ENCODE measurements at regions of chr19 and their contacts with region 1.

Region 1: GRCh38 chr19:49877020-49877878 is at the starts of genes AKT1S1 and TBC1D17:
- DNase-seq: peak; percentile 99 to 100 (median 100)
- H3K4me3 ChIP-seq: peak within 1 kb of the TSS; percentile 97 to 98
- H3K4me3 Mint-ChIP-seq: no peak within 1 kb of the TSS
- H3K27ac ChIP-seq: peak within 1 kb of the TSS; percentile 95
- H3K27ac Mint-ChIP-seq: no peak within 1 kb of the TSS
- H3K4me1 ChIP-seq: peaks cover 29% of the 10 kb centered on the region
- H3K4me1 Mint-ChIP-seq: peaks cover 14 to 44% (median 18%) of the 10 kb centered on the region in 4 donors
- H3K27me3 ChIP-seq: no peaks in the 10 kb centered on the region
- H3K27me3 Mint-ChIP-seq: no peaks in the 10 kb centered on the region
- total RNA-seq, gene AKT1S1: 19.7 to 20.2 TPM
- total RNA-seq, gene TBC1D17: 101 TPM

Region 2: GRCh38 chr19:49640113-49640898 is 236.9 kb before region 1 on chr19 and contains the start of gene RRAS:
- CTCF ChIA-PET with region 1: no interaction called
- POLR2A ChIA-PET with region 1: interaction called, 15 read pairs
- intact Hi-C with region 1: loop called (anchors 1 kb)
- DNase-seq: peak; percentile 99 to 100 (median 100)
- H3K4me3 ChIP-seq: peak within 1 kb of the TSS; percentile 42 to 73
- H3K4me3 Mint-ChIP-seq: peak within 1 kb of the TSS; percentile 89 to 95 (median 92)
- H3K27ac ChIP-seq: peak within 1 kb of the TSS; percentile 97
- H3K27ac Mint-ChIP-seq: peak within 1 kb of the TSS; percentile 96 to 100 (median 99)
- H3K4me1 ChIP-seq: peaks cover 63% of the 10 kb centered on the region
- H3K4me1 Mint-ChIP-seq: peaks cover 44 to 73% (median 56%) of the 10 kb centered on the region in 4 donors
- H3K27me3 ChIP-seq: no peaks in the 10 kb centered on the region
- H3K27me3 Mint-ChIP-seq: no peaks in the 10 kb centered on the region
- total RNA-seq, gene RRAS: 12.0 to 13.4 TPM

Region 3: DNA sequence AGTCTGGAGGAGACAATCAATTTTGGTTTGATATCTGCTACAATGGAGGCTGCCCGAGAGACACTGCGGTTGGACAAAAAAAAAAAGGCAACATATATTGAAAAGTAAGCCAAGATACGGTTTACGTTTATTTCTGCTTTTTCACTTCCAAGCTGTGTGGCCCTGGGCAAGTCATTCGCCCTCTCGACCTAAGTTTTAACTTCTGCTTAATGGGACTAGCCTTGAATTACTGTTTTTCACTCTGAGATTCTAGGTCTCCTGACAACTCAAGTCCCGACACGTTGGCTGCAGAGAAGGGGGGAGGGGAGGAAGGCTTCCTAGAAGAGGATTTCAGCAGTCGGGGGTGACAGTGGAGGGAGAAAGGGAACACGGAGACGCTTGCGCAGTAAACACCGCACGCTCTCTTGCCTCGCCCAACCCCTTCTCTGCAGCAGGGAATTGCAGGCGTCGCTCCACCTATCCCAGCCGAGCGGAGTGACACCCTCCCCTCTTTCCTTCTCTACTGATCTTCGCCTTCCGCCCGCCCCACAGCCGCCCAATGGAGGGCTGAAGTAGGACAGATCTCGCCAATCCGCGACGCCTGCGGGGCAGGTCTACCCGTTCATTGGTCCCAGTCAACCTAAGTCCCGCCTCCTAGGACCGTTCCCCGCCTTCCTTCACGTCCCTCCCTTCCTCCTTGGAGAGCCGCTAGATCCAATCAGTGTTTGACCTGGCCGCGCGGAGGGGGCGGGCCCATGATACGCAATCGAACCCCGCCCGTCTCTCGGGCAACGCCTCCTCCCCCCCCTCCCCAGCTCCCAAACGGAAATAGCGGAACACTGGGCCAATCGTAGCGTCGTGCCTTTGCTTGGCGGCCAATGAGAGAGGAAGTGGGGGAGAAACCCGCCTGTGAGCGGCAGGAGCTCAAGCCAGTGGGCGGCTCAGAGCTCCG is 111.0 kb before region 1 on chr19:
- CTCF ChIA-PET with region 1: no interaction called
- POLR2A ChIA-PET with region 1: interaction called, 24 read pairs
- intact Hi-C with region 1: loop called (anchors 1 kb)
- DNase-seq: peak; percentile 98 to 100 (median 100)
- H3K4me3 ChIP-seq: peak overlapping the region; percentile 75 to 88
- H3K4me3 Mint-ChIP-seq: peak overlapping the region; percentile 89 to 99 (median 94)
- H3K27ac ChIP-seq: peak overlapping the region; percentile 77
- H3K27ac Mint-ChIP-seq: peak overlapping the region; percentile 85 to 97 (median 96)
- H3K4me1 ChIP-seq: peaks cover 36% of the 10 kb centered on the region
- H3K4me1 Mint-ChIP-seq: peaks cover 30 to 48% (median 34%) of the 10 kb centered on the region in 4 donors
- H3K27me3 ChIP-seq: no peaks in the 10 kb centered on the region
- H3K27me3 Mint-ChIP-seq: no peaks in the 10 kb centered on the region

Region 4: DNA sequence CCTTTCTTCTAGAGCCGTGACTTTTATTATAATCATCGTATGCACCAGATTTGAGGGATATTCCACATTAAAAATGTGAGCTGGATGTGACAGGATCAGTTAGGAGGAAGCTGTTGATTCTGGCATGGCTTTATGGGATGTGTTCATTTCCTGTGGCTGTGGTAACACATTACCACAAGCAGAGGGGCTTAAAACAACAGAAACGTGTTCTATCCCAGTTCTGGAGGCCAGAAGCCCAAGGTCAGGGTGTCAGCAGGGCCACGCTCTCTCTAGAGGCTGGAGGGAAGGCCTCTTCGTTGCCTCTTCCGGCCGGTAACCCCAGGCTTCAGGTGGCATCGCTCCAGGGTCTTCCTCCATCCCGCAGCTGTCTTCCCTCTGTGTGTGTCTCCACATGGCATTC is 44.7 kb before region 1 on chr19:
- CTCF ChIA-PET with region 1: no interaction called
- POLR2A ChIA-PET with region 1: no interaction called
- intact Hi-C with region 1: no loop called
- DNase-seq: no peak
- H3K4me3 ChIP-seq: no peak overlapping the region
- H3K4me3 Mint-ChIP-seq: no peak overlapping the region
- H3K27ac ChIP-seq: no peak overlapping the region
- H3K27ac Mint-ChIP-seq: peak overlapping the region in 2 of 7 donors; percentile 68 to 83
- H3K4me1 ChIP-seq: no peaks in the 10 kb centered on the region
- H3K4me1 Mint-ChIP-seq: peaks cover 0 to under 1% (median 0%) of the 10 kb centered on the region in 4 donors
- H3K27me3 ChIP-seq: no peaks in the 10 kb centered on the region
- H3K27me3 Mint-ChIP-seq: no peaks in the 10 kb centered on the region

Region 5: DNA sequence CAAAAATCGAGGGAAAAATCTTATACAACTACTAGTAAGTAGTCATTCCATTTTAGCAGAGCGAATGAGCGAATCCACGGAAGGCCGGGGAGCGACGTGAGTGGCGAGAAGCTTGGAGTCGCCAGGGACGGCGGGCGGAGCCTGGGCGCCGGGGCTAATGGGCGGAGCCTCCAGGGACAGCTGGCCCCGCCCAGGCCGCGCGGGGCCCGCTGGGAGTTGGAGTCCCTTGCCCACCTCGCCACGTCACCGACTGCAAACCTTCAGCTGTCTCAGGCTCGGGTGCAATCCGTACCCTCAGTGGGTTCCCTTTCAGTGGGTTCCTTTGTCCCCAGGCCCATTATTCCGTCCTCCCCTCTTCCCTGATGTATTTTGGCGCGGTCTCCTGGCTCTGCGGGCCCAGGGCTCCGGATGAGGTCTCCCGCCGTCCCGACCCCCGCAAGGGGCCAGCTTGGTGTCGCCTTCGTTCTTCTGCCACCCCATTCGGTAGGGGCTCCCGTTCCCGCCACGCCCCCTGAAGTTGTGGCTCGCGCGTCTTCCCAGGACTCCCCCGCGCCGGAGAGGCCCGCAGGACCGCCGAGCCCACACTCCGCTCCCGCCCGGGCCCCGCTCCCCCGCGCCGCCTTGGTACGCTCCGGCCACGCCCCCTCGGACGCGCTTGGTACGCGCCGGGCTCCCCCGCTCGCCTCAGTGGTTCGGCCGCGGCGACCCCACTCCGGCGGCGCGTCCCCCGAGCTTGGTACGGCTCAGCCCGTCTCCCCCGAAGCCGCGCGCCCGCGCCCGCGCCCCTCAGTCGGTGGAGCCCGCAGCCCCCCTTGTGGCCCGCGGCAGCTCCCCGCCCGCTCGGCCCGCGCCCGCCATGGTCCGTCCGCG is 26.5 kb before region 1 on chr19 and contains the start of gene PTOV1:
- CTCF ChIA-PET with region 1: no interaction called
- POLR2A ChIA-PET with region 1: interaction called, 60 read pairs
- intact Hi-C with region 1: loop called (anchors 1 kb)
- DNase-seq: peak; percentile 84 to 90 (median 87)
- H3K4me3 ChIP-seq: peak within 1 kb of the TSS; percentile 54 to 88
- H3K4me3 Mint-ChIP-seq: peak within 1 kb of the TSS; percentile 90 to 97 (median 93)
- H3K27ac ChIP-seq: peak within 1 kb of the TSS; percentile 98
- H3K27ac Mint-ChIP-seq: peak within 1 kb of the TSS; percentile 92 to 98 (median 97)
- H3K4me1 ChIP-seq: peaks cover 42% of the 10 kb centered on the region
- H3K4me1 Mint-ChIP-seq: peaks cover 29 to 49% (median 39%) of the 10 kb centered on the region in 4 donors
- H3K27me3 ChIP-seq: no peaks in the 10 kb centered on the region
- H3K27me3 Mint-ChIP-seq: no peaks in the 10 kb centered on the region
- total RNA-seq, gene PTOV1: 150 to 156 TPM

Region 6: DNA sequence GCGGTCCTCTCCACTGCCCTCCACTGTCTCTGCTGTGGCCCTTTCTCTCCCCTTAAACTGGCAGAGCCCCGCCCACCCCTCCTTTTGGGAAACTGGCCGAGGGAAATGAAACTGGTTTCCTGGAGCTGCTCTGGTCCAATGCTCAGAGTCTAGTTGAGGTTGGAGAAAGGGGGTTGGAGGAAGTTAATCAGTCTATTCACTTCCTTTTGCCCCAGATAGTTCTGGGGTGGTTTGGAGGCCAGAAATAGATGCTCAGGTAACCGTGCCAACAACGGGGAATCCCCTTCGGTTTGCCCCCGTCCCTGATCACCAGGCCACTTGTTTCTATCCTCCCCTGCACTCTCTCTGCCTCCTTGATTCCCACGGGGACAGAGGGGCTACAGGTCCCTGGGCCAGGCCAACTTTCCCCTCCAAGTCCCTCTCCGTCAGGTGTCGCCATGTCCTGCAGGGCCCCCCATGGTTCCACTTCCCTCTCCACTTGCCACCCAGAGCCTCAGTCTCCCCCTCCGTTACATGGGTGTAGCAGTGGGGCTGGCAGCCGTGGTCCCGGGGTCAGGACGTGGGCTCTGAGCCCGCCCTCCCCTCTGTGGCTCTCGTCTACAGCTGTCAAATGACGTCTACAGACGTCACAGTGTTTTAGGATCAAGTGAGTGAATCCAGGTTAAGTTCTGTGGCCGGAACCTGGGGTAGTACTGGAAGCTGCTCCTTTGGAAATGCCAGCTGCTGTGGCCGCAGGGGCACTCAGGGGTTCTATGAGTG is 19.8 kb after region 1 on chr19 and contains the start of gene IL4I1:
- CTCF ChIA-PET with region 1: no interaction called
- POLR2A ChIA-PET with region 1: interaction called, 51 read pairs
- intact Hi-C with region 1: loop called (anchors 2 kb)
- DNase-seq: peak; percentile 76 to 94 (median 87)
- H3K4me3 ChIP-seq: peak within 1 kb of the TSS; percentile 1 to 44
- H3K4me3 Mint-ChIP-seq: peak within 1 kb of the TSS; percentile 85 to 92 (median 90)
- H3K27ac ChIP-seq: peak within 1 kb of the TSS; percentile 98
- H3K27ac Mint-ChIP-seq: peak within 1 kb of the TSS; percentile 97 to 100 (median 99)
- H3K4me1 ChIP-seq: peaks cover 44% of the 10 kb centered on the region
- H3K4me1 Mint-ChIP-seq: peaks cover 23 to 54% (median 40%) of the 10 kb centered on the region in 4 donors
- H3K27me3 ChIP-seq: no peaks in the 10 kb centered on the region
- H3K27me3 Mint-ChIP-seq: no peaks in the 10 kb centered on the region
- total RNA-seq, gene IL4I1: 2.6 to 3.4 TPM